Stomach (tissue), 19 donors: ENCODE measurements at regions of chr2 and their contacts with region 1.

Region 1: DNA sequence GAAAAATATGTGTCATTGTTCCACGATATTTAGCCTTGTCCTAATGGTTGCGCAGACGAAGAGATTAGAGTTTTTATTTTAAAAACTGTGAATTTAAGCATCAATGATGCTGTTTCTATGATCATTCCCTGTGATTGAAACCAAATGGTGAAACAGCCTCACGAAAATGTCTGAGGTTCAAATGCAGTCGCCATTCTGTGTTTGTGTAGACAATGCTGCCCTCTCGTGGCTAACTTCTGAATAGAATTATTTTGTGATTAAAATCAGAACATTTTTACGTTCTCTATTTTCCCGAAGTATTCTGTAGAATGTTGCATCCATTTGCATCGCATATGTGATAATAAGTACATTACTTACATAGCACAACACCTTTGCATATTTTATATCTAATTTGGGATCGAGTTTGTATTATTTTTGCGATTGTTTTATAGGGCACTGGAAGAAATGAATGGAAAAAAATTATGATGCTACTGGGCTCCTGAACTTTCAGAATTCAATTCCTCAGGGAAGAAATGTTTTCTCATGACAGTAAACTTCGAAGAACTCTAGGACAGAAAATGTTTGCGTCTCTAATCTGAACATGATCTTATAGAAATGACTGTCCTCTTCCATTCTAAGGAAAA is 54.8 kb upstream of the CREB1 start:
- DNase-seq: peak in 1 of 2 donors; percentile 82
- H3K4me3 ChIP-seq: peak overlapping the region in 2 of 4 donors; percentile 20 to 22
- H3K27ac ChIP-seq: no peak overlapping the region
- H3K4me1 ChIP-seq: peaks cover 0 to 29% (median 15%) of the 10 kb centered on the region in 4 donors
- H3K27me3 ChIP-seq: no peaks in the 10 kb centered on the region
- CTCF ChIP-seq: peak in 5 of 7 experiments; percentile 30 to 87 (median 80)
- EP300 ChIP-seq: no peak
- POLR2A ChIP-seq: no peak

Region 2: GRCh38 chr2:206937555-206937954 is 537.4 kb before region 1 on chr2:
- intact Hi-C with region 1: no loop called
- DNase-seq: no peak
- H3K4me3 ChIP-seq: no peak overlapping the region
- H3K27ac ChIP-seq: no peak overlapping the region
- H3K4me1 ChIP-seq: no peaks in the 10 kb centered on the region
- H3K27me3 ChIP-seq: no peaks in the 10 kb centered on the region
- CTCF ChIP-seq: no peak
- EP300 ChIP-seq: no peak
- POLR2A ChIP-seq: no peak

Region 3: GRCh38 chr2:206981739-206982340 is 493.1 kb before region 1 on chr2:
- intact Hi-C with region 1: loop called (anchors 5 kb)
- DNase-seq: peak; percentile 71 to 89
- H3K4me3 ChIP-seq: no peak overlapping the region
- H3K27ac ChIP-seq: no peak overlapping the region
- H3K4me1 ChIP-seq: peaks cover 0 to 23% (median 11%) of the 10 kb centered on the region in 4 donors
- H3K27me3 ChIP-seq: no peaks in the 10 kb centered on the region
- CTCF ChIP-seq: peak in 5 of 7 experiments; percentile 51 to 72 (median 66)
- EP300 ChIP-seq: no peak
- POLR2A ChIP-seq: no peak

Region 4: GRCh38 chr2:207533461-207534008 is 58.6 kb after region 1 on chr2:
- intact Hi-C with region 1: no loop called
- DNase-seq: no peak
- H3K4me3 ChIP-seq: no peak overlapping the region
- H3K27ac ChIP-seq: peak overlapping the region in 3 of 5 donors; percentile 20 to 99 (median 98)
- H3K4me1 ChIP-seq: peaks cover 29 to 75% (median 51%) of the 10 kb centered on the region in 4 donors
- H3K27me3 ChIP-seq: no peaks in the 10 kb centered on the region
- CTCF ChIP-seq: no peak
- EP300 ChIP-seq: no peak
- POLR2A ChIP-seq: no peak